ENCODE measurements at regions of chr16 and their contacts with region 1.

Region 1: GRCh38 chr16:88737298-88738150 is 31.2 kb downstream of the CTU2 start:
- DNase-seq: peak; percentile 50
- H3K4me3 ChIP-seq: no peak overlapping the region
- H3K27ac ChIP-seq: no peak overlapping the region
- H3K4me1 ChIP-seq: no peaks in the 10 kb centered on the region
- H3K27me3 ChIP-seq: no peaks in the 10 kb centered on the region
- CTCF ChIP-seq: peak; percentile 97 to 99
- POLR2A ChIP-seq: no peak

Region 2: DNA sequence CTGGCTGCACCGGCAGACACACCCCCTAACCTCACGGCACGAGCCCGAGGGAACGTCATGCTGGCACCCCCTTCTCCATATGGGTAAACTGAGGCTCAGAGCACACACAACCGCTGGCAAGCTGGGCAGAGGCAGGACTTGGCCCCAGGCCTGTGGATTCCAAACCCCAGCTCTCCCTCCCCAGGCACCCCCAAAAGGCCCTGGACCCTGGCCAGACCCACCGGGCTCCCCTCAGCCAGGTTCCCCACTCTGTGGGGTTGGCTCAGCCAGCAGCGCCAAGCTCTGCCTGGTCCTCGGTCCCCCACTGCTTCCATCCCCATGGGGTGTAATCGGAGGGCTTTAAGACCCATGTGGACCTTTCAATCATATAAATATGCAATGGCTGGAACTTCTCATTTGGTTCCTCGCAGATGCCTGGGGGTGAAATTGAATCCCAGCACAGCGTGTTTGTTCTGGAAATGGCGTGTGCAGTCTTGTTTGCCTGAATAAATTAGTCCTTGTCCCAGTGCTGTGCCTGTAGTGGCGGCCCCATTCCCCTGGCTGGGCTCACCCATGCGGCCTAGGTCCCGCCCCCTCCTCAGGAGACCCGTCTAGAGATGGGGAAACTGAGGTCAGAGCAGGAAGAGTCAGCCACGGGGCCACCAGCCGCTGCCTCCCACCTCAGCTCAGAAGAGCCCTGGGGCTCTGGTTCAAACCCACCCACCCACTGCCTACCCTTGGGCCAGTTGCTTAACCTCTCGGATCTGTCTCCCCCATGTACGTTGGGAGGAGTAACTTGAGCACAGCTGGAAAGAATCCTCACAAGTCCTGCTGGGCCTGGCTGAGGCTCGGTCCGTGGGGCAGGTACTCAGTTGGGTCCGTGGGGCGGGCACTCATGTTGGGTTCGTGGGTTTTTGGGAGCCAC is 227.2 kb before region 1 on chr16:
- CTCF ChIA-PET with region 1: no interaction called
- POLR2A ChIA-PET with region 1: no interaction called
- dilution Hi-C with region 1: no loop called
- intact Hi-C with region 1: no loop called
- DNase-seq: no peak
- H3K4me3 ChIP-seq: no peak overlapping the region
- H3K27ac ChIP-seq: no peak overlapping the region
- H3K4me1 ChIP-seq: no peaks in the 10 kb centered on the region
- H3K27me3 ChIP-seq: no peaks in the 10 kb centered on the region
- CTCF ChIP-seq: no peak
- POLR2A ChIP-seq: no peak

Region 3: DNA sequence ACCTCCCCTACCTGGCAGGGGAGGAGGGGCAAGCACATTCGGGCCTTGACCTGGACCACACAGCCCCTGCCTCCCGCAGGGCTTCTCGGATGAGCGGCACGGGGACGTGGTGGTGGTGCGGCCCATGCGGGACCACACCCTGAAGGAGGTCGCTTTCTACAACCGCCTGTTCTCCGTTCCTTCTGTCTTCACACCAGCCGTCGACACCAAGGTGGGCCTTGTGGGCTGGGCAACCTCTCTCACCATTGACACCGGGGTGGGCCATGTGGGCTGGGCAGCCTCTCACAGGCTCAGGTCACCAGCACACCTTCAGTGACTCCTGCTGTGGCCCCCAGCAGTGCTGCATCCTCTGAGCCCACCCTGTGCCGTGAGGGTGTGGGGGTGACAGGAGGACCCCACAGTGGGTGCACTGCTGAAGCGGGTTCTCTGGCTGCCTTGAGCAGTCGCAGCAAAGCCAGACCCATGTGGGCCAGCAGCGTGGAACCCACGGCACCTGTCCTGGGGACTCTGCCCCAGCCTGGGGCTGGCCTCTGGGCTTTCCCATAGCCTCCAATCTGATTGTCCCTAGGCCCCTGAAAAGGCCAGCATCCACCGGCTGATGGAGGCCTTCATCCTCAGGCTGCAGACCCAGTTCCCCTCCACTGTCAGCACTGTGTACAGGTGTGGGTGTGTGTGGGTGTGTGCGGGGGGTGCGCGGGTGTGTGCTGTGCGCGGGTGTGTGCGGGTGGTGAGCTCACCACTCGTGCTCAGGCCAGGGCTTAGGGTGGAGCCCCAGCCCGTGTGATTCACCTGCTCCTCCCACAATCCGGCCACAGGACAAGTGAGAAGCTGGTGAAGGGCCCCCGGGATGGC is 23.7 kb before region 1 on chr16:
- CTCF ChIA-PET with region 1: interaction called, 11 read pairs
- POLR2A ChIA-PET with region 1: no interaction called
- dilution Hi-C with region 1: no loop called
- intact Hi-C with region 1: no loop called
- DNase-seq: no peak
- H3K4me3 ChIP-seq: no peak overlapping the region
- H3K27ac ChIP-seq: no peak overlapping the region
- H3K4me1 ChIP-seq: no peaks in the 10 kb centered on the region
- H3K27me3 ChIP-seq: no peaks in the 10 kb centered on the region
- CTCF ChIP-seq: no peak
- POLR2A ChIP-seq: no peak

Region 4: DNA sequence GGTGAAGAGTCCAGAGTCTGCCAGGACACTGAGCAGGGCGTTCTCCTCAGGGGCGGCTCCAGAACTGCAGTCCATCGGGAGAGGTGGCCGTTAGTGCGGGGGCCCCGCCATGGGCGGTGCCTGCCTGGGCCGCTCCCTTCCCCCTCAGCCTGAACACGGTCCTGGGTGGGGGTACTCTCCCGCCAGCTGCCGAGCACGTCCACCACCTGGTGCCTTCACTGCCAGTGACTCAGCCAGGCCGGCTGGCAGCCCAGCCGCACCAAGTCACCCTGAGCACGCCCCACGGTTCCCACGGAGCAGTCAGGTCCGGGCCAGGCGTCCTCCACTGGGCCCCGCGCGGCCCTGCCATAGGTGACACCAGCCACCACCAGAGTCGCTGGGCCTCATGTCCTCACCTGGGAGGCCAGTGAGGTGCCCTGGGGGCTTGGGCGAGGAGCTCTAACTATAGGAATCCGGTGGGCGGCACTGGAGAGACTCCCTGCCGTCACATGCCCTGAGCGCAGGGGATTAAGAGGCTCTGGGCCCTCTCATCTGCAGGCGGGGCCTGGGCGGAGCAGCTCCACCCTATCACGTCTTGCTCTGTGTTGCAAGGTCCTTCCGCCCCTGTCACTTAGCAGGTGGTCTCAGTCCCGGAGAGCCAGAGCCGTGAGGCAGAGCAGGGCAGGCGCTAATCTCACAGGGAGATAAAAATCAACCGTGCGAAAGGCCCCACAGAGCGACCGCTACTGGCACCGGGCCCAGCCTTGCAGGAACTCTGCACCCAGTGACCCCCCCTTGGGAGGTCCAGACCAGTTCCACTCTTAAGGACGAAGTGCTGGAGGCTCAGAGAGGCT is 33.2 kb after region 1 on chr16:
- CTCF ChIA-PET with region 1: interaction called, 35 read pairs
- POLR2A ChIA-PET with region 1: no interaction called
- dilution Hi-C with region 1: no loop called
- intact Hi-C with region 1: no loop called
- DNase-seq: peak; percentile 64
- H3K4me3 ChIP-seq: no peak overlapping the region
- H3K27ac ChIP-seq: peak overlapping the region; percentile 16
- H3K4me1 ChIP-seq: peaks cover 45% of the 10 kb centered on the region
- H3K27me3 ChIP-seq: no peaks in the 10 kb centered on the region
- CTCF ChIP-seq: no peak
- POLR2A ChIP-seq: no peak

Region 5: DNA sequence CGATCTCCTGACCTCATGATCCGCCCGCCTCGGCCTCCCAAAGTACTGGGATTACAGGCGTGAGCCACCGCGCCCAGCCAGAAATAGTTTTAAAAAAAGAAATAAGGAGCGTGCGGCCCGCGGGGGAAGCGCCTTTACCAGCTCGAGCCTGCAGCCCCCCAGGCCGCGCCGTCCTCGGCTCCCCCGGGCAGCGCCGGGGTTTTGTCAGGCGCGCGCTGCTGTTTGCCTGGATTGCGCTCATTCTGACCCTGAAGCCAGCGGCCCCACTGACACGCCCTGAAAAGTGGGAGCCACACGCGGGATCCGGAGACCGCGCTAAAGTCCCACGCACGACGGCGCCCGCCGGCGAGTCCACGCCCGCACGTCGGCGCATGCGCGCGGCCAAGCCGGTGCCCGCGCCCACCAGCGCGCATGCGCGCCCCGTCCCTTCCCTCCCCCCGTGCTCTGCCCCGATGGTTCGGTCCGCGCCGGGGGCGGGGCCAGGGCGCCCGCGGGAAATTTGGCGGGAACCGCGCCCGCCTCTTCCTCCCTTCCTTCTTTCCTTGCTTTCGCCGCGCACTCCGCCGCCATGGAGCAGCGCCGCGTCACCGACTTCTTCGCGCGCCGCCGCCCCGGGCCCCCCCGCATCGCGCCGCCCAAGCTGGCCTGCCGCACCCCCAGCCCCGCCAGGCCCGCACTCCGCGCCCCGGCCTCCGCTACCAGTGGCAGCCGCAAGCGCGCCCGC is 65.9 kb after region 1 on chr16 and contains the start of gene CDT1:
- CTCF ChIA-PET with region 1: interaction called, 14 read pairs
- POLR2A ChIA-PET with region 1: interaction called, 3 read pairs
- dilution Hi-C with region 1: no loop called
- intact Hi-C with region 1: loop called (anchors 1 kb)
- DNase-seq: peak; percentile 76
- H3K4me3 ChIP-seq: peak within 1 kb of the TSS; percentile 46 to 49 (median 47)
- H3K27ac ChIP-seq: peak within 1 kb of the TSS; percentile 58
- H3K4me1 ChIP-seq: peaks cover 10% of the 10 kb centered on the region
- H3K27me3 ChIP-seq: no peaks in the 10 kb centered on the region
- CTCF ChIP-seq: no peak
- POLR2A ChIP-seq: peak; percentile 82
- total RNA-seq, gene CDT1: 26.5 and 30.6 TPM in 2 replicates

Region 6: GRCh38 chr16:89171463-89172170 is 434.1 kb after region 1 on chr16 and contains the start of gene CDH15:
- CTCF ChIA-PET with region 1: interaction called, 23 read pairs
- POLR2A ChIA-PET with region 1: no interaction called
- dilution Hi-C with region 1: no loop called
- intact Hi-C with region 1: no loop called
- DNase-seq: peak; percentile 88
- H3K4me3 ChIP-seq: no peak within 1 kb of the TSS
- H3K27ac ChIP-seq: no peak within 1 kb of the TSS
- H3K4me1 ChIP-seq: peaks cover 3% of the 10 kb centered on the region
- H3K27me3 ChIP-seq: peaks cover 0 to 3% of the 10 kb centered on the region in 2 experiments
- CTCF ChIP-seq: no peak
- POLR2A ChIP-seq: no peak
- total RNA-seq, gene CDH15: not detected in 2 replicates